ENCODE measurements at regions of chr6 and their contacts with region 1.

Region 1: GRCh38 chr6:106325336-106326178 is at the start of gene ATG5:
- DNase-seq: peak; percentile 98
- ATAC-seq: peak; percentile 97
- H3K4me3 ChIP-seq: peak within 1 kb of the TSS; percentile 61 to 99
- H3K27ac ChIP-seq: peak within 1 kb of the TSS; percentile 98
- H3K4me1 ChIP-seq: peaks cover 10% of the 10 kb centered on the region
- H3K27me3 ChIP-seq: no peaks in the 10 kb centered on the region; the same call in 1 of the 2 replicates
- CTCF ChIP-seq: no peak
- total RNA-seq, gene ATG5: 51.4 TPM

Region 2: DNA sequence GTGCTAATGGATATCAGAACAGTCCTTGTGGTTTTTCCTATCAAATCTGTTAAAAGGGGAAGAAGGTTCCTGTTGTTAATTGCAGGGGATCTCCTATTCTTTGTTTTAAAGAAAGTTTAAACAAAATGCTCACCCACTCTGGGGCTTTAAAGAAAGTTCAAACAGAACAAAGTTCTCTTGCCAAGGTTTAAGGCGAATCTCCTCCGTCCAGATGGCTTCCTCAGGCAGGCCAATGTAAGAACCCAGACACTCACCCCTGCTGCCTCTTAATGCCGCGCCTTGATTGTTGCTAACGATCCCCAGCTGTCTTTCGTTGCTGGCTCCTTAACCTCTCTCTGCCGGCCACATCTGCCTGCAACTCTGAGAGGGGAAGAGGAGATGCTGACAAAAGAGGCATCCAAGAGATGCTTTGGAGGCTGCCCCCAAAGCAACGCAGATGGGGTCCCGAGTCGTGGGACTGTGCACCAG is 474.4 kb before region 1 on chr6:
- CTCF ChIA-PET with region 1: no interaction called
- POLR2A ChIA-PET with region 1: interaction called, 10 read pairs
- in situ Hi-C with region 1: no loop called
- intact Hi-C with region 1: no loop called
- DNase-seq: no peak
- ATAC-seq: no peak
- H3K4me3 ChIP-seq: no peak overlapping the region
- H3K27ac ChIP-seq: no peak overlapping the region
- H3K4me1 ChIP-seq: no peaks in the 10 kb centered on the region
- H3K27me3 ChIP-seq: no peaks in the 10 kb centered on the region
- CTCF ChIP-seq: no peak

Region 3: DNA sequence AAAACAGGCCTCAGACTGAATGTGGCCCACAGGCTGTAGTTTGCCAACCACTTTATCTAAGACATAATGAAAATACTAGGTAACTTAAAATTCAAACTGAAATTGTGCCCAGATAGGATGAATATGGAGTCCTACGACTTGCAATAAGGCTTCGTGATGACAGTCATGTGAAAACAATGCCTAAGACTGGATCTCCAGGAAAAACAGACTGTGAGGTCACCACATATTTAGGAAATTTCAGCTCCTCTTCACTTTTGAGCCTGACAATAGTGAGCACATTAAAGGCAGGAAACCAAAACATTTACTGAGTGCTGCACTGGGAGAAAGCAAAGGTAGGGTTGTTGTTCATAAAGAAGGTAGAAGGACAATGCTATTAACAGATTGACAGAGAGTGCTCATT is 253.7 kb after region 1 on chr6:
- CTCF ChIA-PET with region 1: no interaction called
- POLR2A ChIA-PET with region 1: no interaction called
- in situ Hi-C with region 1: no loop called
- intact Hi-C with region 1: no loop called
- DNase-seq: no peak
- ATAC-seq: no peak
- H3K4me3 ChIP-seq: no peak overlapping the region
- H3K27ac ChIP-seq: no peak overlapping the region
- H3K4me1 ChIP-seq: no peaks in the 10 kb centered on the region
- H3K27me3 ChIP-seq: no peaks in the 10 kb centered on the region
- CTCF ChIP-seq: no peak